B cell (primary cell): ENCODE measurements at regions of chr1 and their contacts with region 1.

Region 1: GRCh38 chr1:243727503-243728203 is 122.4 kb downstream of the AKT3 start:
- DNase-seq: peak; percentile 76
- ATAC-seq: peak; percentile 85
- H3K4me3 ChIP-seq: peak overlapping the region in 3 of 5 experiments; percentile 6 to 39 (median 8)
- H3K4me3 Mint-ChIP-seq: peak overlapping the region; percentile 58
- H3K27ac ChIP-seq: peak overlapping the region; percentile 74 to 78
- H3K27ac Mint-ChIP-seq: peak overlapping the region; percentile 89
- H3K4me1 ChIP-seq: peaks cover 30 to 35% of the 10 kb centered on the region in 2 donors
- H3K4me1 Mint-ChIP-seq: peaks cover 67% of the 10 kb centered on the region
- H3K27me3 ChIP-seq: no peaks in the 10 kb centered on the region
- H3K27me3 Mint-ChIP-seq: no peaks in the 10 kb centered on the region
- CTCF ChIP-seq: no peak

Region 2: GRCh38 chr1:243508303-243508713 is 219.3 kb before region 1 on chr1:
- CTCF ChIA-PET with region 1: no interaction called
- POLR2A ChIA-PET with region 1: no interaction called
- intact Hi-C with region 1: loop called (anchors 10 kb)
- DNase-seq: peak; percentile 71
- ATAC-seq: peak; percentile 89
- H3K4me3 ChIP-seq: peak overlapping the region in 3 of 5 experiments; percentile 11 to 34 (median 26)
- H3K4me3 Mint-ChIP-seq: peak overlapping the region; percentile 78
- H3K27ac ChIP-seq: peak overlapping the region; percentile 3 to 31
- H3K27ac Mint-ChIP-seq: peak overlapping the region; percentile 88
- H3K4me1 ChIP-seq: peaks cover 32 to 34% of the 10 kb centered on the region in 2 donors
- H3K4me1 Mint-ChIP-seq: peaks cover 46% of the 10 kb centered on the region
- H3K27me3 ChIP-seq: no peaks in the 10 kb centered on the region
- H3K27me3 Mint-ChIP-seq: no peaks in the 10 kb centered on the region
- CTCF ChIP-seq: no peak

Region 3: DNA sequence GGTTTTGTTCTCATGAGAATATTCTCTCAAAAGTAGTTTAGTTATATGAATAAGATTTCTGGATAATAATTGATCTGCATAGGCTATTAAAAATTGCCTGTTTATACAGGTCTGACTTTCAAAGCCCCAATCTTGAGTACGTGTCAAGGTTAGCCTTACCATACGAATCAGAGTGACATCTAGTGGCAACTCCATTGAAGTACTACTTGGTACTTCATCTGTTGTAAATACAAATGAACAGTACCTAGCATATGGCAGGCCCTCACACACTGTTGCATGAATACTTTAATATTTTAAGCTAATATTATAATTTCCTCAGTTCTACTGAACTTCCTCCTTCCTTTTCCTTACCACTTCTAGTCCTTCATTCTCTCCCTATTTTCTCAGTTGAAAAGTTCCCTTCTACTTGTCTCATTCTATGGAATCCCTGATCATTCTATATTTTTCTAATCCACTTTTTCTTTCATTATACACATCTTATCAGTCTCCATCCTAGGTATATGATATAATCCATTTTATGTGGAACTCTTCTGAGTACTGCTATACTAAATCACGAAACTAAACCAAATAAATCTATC is 21.1 kb after region 1 on chr1:
- CTCF ChIA-PET with region 1: interaction called, 5 read pairs
- POLR2A ChIA-PET with region 1: no interaction called
- intact Hi-C with region 1: loop called (anchors 1 kb)
- DNase-seq: peak; percentile 73
- ATAC-seq: peak; percentile 93
- H3K4me3 ChIP-seq: no peak overlapping the region
- H3K4me3 Mint-ChIP-seq: no peak overlapping the region
- H3K27ac ChIP-seq: no peak overlapping the region
- H3K27ac Mint-ChIP-seq: no peak overlapping the region
- H3K4me1 ChIP-seq: no peaks in the 10 kb centered on the region
- H3K4me1 Mint-ChIP-seq: peaks cover 1% of the 10 kb centered on the region
- H3K27me3 ChIP-seq: no peaks in the 10 kb centered on the region
- H3K27me3 Mint-ChIP-seq: no peaks in the 10 kb centered on the region
- CTCF ChIP-seq: peak; percentile 94